Panc1 (cell line): ENCODE measurements at regions of chr12 and their contacts with region 1.

Region 1: GRCh38 chr12:105301696-105302095 is 28.8 kb upstream of the C12orf75 start:
- DNase-seq: no peak
- ATAC-seq: no peak
- H3K4me3 ChIP-seq: no peak overlapping the region
- H3K27ac ChIP-seq: no peak overlapping the region
- H3K4me1 ChIP-seq: no peaks in the 10 kb centered on the region
- H3K27me3 ChIP-seq: no peaks in the 10 kb centered on the region
- CTCF ChIP-seq: no peak

Region 2: GRCh38 chr12:105273601-105274000 is 28.1 kb before region 1 on chr12:
- CTCF ChIA-PET with region 1: no interaction called
- POLR2A ChIA-PET with region 1: interaction called, 12 read pairs
- in situ Hi-C with region 1: no loop called
- intact Hi-C with region 1: no loop called
- DNase-seq: no peak
- ATAC-seq: no peak
- H3K4me3 ChIP-seq: no peak overlapping the region
- H3K27ac ChIP-seq: no peak overlapping the region
- H3K4me1 ChIP-seq: no peaks in the 10 kb centered on the region
- H3K27me3 ChIP-seq: peaks cover 2% of the 10 kb centered on the region; the same call in 1 of the 2 replicates
- CTCF ChIP-seq: no peak